Activated CD4-positive, alpha-beta memory T cell treated with anti-CD3 and anti-CD28 coated beads for 36 hours (primary cell): ENCODE measurements at regions of chr14 and their contacts with region 1.

Region 1: DNA sequence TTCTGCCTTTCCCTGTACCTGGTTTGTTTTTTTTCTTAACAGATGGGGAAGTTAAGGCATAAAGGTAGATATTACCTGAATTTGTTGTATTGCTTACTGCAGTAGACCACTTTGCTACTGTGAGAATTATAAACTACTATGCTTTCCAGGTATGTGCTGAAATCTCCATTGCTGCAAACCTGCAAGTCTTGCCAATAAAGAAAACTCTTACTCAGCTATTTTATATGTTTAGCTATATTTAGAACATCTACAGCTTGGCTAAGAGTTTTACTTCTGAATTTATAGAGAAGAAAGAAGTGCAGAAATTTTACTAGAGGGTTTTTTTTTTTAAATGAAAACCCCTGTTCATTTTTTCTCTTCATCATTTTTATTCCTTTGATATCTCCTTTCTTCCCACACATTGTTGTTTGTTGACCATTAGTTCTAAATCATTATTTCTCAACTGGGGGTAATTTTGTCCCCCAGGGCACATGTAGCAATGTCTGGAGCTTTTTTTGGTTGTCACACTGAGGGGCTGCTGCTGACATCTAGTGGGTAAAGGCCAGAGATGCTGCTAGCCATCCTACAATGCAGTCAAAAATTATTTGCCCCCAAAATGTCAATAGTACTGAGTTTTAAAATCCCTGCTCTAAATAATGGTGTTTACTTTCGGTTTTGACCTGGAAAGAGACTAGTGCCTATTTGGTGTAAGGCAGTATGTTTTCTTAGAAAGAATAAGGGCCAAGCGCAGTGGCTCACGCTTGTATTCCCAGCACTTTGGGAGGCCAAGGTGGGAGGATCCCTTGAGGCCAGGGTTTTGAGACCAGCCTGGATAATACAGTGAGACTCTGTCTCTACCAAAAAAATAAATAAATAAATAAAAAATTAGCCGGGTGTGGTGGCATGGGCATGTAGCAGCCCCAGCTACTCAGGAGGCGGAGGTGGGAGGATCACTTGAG is 48.6 kb downstream of the PCNX1 start:
- DNase-seq: peak; percentile 57
- H3K4me3 Mint-ChIP-seq: no peak overlapping the region
- H3K27ac Mint-ChIP-seq: no peak overlapping the region
- H3K4me1 Mint-ChIP-seq: peaks cover 45% of the 10 kb centered on the region
- H3K27me3 Mint-ChIP-seq: no peaks in the 10 kb centered on the region

Region 2: DNA sequence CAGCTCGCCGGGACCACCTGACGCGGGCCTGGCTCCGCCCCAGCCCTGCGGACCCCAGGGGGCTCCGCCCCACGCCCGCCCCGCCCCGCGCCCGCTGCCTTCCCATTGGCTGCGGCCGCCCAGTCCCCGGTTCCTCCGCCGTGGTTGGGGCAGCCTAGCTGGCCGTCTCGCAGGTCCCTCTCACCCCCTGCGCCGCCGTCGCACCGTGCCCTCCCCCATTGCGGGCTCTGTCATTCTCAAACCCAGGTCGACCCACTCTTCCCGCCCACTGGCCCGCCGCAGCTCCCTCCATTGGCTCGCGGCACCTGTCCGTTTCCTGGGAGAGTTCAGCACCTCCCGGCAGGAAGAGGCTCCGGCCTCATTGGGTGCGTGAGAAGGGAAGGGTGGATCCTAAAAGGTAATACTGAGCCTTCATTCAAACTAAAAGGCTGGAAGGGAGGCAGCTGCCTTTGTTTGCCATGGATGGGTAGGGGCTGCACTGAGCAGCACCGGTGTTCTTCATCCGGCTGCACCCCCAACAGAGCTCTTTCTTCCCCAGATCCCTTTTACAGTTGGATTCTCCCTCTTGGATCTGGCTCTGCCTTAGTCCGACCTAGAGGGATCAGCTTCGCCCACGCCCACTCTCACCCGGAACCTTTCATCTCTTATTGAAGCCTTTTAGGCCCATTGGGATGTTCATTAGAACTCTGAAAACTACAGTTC is 146.1 kb before region 1 on chr14:
- CTCF ChIA-PET with region 1: interaction called, 11 read pairs
- POLR2A ChIA-PET with region 1: no interaction called
- intact Hi-C with region 1: no loop called
- DNase-seq: peak; percentile 96
- H3K4me3 Mint-ChIP-seq: no peak overlapping the region
- H3K27ac Mint-ChIP-seq: no peak overlapping the region
- H3K4me1 Mint-ChIP-seq: peaks cover 6% of the 10 kb centered on the region
- H3K27me3 Mint-ChIP-seq: no peaks in the 10 kb centered on the region

Region 3: GRCh38 chr14:70934502-70935134 is 21.2 kb before region 1 on chr14:
- CTCF ChIA-PET with region 1: interaction called, 12 read pairs
- POLR2A ChIA-PET with region 1: interaction called, 4 read pairs
- intact Hi-C with region 1: no loop called
- DNase-seq: peak; percentile 44
- H3K4me3 Mint-ChIP-seq: peak overlapping the region; percentile 62
- H3K27ac Mint-ChIP-seq: peak overlapping the region; percentile 88
- H3K4me1 Mint-ChIP-seq: peaks cover 78% of the 10 kb centered on the region
- H3K27me3 Mint-ChIP-seq: no peaks in the 10 kb centered on the region

Region 4: GRCh38 chr14:70942342-70942706 is 13.5 kb before region 1 on chr14:
- CTCF ChIA-PET with region 1: interaction called, 22 read pairs
- POLR2A ChIA-PET with region 1: interaction called, 3 read pairs
- intact Hi-C with region 1: no loop called
- DNase-seq: no peak
- H3K4me3 Mint-ChIP-seq: no peak overlapping the region
- H3K27ac Mint-ChIP-seq: peak overlapping the region; percentile 74
- H3K4me1 Mint-ChIP-seq: peaks cover 73% of the 10 kb centered on the region
- H3K27me3 Mint-ChIP-seq: no peaks in the 10 kb centered on the region

Region 5: DNA sequence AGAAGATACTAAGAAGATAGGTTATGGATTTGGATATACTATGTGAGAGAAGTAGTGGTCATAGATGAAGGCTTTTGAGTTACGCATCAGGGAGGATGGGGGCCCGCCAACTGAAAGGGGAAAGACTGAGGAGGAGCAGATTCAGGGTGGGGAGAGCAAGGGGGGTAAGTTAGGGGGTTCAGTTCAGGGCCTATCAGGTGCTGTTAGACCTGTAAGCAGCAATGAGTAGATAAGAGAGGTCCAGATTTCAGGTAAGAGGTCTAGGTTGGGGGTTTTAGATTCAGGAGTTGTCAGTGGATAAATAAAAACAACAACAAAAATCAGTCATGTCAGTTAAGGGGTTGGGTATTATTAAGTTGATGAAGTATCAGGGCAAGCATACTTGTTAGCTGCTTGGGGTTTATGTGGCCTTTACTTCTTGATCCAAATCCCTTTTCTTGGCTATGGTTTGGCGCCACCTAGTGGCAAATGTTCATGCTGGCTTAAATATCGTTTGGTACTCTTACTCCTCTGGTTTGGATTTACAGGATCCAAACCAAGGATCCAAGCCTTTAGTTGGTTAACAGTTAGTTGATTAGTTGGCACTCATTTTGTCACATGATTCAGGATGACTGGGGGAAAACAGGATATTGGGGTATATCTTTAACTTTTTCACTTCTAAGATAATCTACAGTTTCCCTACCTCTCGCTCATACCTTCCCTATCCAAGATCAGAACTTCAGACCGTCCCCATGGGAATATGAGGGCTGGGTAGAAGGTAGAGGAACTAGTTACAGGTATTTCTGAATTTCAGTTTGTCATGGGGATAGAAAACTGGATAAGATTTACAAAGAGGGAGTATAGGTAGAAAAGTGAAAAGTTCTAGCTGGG is 16.5 kb after region 1 on chr14:
- CTCF ChIA-PET with region 1: interaction called, 23 read pairs
- POLR2A ChIA-PET with region 1: no interaction called
- intact Hi-C with region 1: no loop called
- DNase-seq: peak; percentile 88
- H3K4me3 Mint-ChIP-seq: no peak overlapping the region
- H3K27ac Mint-ChIP-seq: peak overlapping the region; percentile 11
- H3K4me1 Mint-ChIP-seq: peaks cover 36% of the 10 kb centered on the region
- H3K27me3 Mint-ChIP-seq: no peaks in the 10 kb centered on the region